Ascending aorta (tissue), 2 donors: ENCODE measurements at regions of chr1 and their contacts with region 1.

Region 1: DNA sequence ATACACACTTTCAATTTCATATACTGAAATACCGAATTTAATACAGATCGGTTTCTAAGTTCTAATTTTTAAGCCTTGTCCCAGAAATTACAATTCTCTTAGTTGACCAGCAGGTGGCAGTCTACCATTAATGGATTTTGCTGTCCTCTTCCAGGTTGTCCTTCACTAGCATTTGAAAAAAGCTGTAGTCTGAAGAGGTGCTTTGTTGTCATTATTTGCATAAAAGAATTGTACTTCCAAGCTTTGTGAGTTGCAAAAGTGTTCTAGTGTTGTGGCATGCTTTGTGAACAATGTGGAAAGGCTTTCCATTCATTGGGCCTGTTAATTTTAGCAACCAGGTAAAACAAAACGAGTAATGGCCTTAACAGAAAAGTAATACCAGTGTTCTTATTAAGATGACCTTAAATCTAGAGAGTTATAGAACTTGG is 193.6 kb downstream of the RPS6KC1 start:
- DNase-seq: no peak
- H3K4me3 ChIP-seq: no peak overlapping the region
- H3K27ac ChIP-seq: no peak overlapping the region
- H3K4me1 ChIP-seq: no peaks in the 10 kb centered on the region
- H3K27me3 ChIP-seq: no peaks in the 10 kb centered on the region
- CTCF ChIP-seq: peak; percentile 26 to 86 (median 71)

Region 2: GRCh38 chr1:213120386-213120785 is 124.3 kb before region 1 on chr1:
- intact Hi-C with region 1: loop called (anchors 2 kb)
- DNase-seq: no peak
- H3K4me3 ChIP-seq: no peak overlapping the region
- H3K27ac ChIP-seq: no peak overlapping the region
- H3K4me1 ChIP-seq: peaks cover 0 to 5% of the 10 kb centered on the region in 2 donors
- H3K27me3 ChIP-seq: no peaks in the 10 kb centered on the region
- CTCF ChIP-seq: no peak

Region 3: DNA sequence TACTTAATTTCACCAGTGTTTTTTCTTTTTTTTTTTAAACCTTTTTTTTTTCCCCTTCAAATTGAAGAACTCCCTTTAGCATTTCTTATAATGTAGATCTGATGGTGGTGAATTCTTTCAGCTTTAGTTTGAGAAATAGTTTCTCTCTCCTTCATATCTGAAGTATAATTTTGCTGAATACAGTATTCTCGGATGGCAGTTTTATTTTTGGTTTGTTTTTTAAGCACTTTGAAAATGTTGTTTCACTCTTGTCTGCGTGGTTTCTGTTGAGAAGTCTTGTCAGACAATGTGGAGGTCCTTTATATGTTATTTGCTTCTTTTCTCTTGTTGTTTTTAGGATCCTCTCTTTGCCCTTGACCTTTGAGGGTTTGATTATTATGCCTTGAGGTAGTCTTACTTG is 58.5 kb before region 1 on chr1:
- intact Hi-C with region 1: no loop called
- DNase-seq: no peak
- H3K4me3 ChIP-seq: no peak overlapping the region
- H3K27ac ChIP-seq: no peak overlapping the region
- H3K4me1 ChIP-seq: no peaks in the 10 kb centered on the region
- H3K27me3 ChIP-seq: no peaks in the 10 kb centered on the region
- CTCF ChIP-seq: no peak

Region 4: DNA sequence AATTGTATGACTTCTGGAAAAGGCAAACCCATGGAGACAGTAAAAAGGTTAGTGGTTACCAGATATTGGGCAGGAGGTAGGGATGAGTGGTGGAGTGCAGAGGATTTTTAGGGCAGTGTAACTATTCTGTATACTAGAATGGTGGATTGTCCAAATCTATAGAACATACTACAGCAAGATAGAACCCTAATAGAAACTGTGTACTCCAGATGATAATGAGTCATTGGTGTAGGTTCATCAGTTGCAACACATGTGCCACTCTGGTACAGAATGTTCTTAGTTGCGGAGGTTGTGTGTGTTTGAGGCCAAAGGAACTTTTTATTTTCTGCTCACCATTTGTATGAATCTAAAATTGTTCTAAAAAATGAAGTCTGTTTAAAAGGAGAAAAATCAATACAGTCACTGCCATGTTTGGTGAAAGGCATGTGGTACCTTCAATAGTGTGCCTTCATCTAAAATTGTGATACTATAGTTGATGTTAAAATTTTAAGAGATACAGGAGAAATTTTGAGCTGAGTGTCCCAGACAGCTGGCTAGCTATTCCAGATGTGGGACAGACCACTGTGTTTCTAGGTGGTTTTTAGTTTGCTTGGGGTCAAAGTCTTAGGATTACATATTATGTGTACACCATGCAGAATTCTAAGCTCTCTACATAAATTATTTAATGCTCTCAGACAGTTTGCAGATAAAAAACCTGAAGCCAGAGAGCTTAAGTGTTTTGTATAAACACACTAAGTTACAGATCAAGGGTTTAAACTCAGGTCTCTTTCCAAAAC is 43.1 kb before region 1 on chr1:
- intact Hi-C with region 1: no loop called
- DNase-seq: no peak
- H3K4me3 ChIP-seq: no peak overlapping the region
- H3K27ac ChIP-seq: no peak overlapping the region
- H3K4me1 ChIP-seq: no peaks in the 10 kb centered on the region
- H3K27me3 ChIP-seq: no peaks in the 10 kb centered on the region
- CTCF ChIP-seq: no peak

Region 5: DNA sequence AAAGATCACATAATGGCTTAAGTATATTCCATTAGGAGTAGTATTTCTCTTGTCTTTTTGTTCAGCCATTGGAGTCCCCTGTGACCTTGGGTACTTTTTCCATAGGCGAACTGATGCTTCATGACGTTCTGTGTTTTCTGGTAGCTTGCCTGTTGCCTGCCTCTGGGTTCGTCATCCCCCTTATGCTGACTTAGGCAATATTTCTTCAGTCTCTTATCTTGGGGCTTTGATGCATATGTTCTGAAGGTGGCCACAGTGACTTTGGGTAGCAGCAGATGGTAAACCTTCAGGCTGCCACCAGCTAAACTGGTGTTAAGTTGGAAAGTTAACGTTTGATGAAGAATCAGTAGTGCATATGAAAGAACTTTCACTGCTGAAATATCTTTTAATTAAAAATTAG is 23.5 kb before region 1 on chr1:
- intact Hi-C with region 1: no loop called
- DNase-seq: no peak
- H3K4me3 ChIP-seq: no peak overlapping the region
- H3K27ac ChIP-seq: no peak overlapping the region
- H3K4me1 ChIP-seq: no peaks in the 10 kb centered on the region
- H3K27me3 ChIP-seq: no peaks in the 10 kb centered on the region
- CTCF ChIP-seq: no peak

Region 6: DNA sequence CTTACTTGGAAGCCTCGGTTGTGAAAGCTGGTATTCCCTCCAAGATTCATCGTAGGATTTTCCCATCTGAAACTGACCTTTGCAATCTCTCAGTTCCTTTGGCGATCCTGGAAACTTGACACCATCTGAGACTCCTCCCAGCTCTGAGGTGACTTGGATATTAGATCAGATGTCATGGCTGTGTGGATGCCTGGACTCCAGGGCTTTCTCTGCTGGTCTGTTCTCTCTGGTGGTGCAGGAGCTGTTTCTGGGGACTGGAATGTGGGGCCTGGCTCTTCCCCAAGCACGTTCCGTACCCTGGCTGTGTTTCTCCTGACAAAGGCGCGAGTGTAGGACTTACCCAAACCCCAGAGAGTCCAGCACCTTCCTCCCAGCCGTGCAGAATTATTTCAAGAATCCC is 58.6 kb after region 1 on chr1:
- intact Hi-C with region 1: no loop called
- DNase-seq: no peak
- H3K4me3 ChIP-seq: no peak overlapping the region
- H3K27ac ChIP-seq: no peak overlapping the region
- H3K4me1 ChIP-seq: no peaks in the 10 kb centered on the region
- H3K27me3 ChIP-seq: no peaks in the 10 kb centered on the region
- CTCF ChIP-seq: no peak

Region 7: DNA sequence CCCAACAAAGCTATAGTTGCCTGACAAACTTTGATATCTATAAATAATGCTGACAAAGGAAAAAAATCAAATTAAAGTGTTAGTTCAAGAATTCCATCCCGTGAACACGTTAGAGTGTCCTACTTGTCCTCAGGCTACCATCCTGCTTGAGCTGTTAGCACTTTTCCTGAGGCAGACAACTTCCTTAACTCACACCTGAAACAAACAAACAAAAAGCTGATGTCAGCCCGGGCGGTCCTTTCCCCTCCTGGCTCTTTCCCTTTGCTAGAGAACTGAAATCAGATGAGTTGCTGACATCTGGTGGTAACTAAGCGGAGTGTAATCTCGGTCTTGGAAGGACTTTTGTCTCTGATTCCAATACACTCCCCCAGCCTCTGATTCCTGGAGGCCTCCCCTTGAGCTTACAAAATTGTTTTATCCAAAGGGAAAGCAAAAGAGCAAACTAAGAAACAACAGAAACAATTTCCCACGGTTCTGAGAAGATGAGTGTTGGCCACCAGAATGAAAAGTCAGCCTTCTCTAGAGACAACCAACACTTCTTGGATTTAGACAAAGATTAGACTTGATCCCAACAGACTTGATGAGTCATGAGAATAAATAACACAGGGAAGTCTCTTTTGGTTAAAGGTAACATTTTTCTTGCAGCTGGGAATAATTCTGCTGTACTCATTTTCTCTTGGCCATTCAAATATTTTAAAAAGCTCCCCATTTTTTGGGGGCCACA is 878.5 kb after region 1 on chr1:
- intact Hi-C with region 1: loop called (anchors 10 kb)
- DNase-seq: no peak
- H3K4me3 ChIP-seq: no peak overlapping the region
- H3K27ac ChIP-seq: no peak overlapping the region
- H3K4me1 ChIP-seq: no peaks in the 10 kb centered on the region
- H3K27me3 ChIP-seq: no peaks in the 10 kb centered on the region
- CTCF ChIP-seq: peak in 2 of 3 experiments; percentile 12 to 33